KBM-7 (cell line): ENCODE measurements at regions of chr12 and their contacts with region 1.

Region 1: DNA sequence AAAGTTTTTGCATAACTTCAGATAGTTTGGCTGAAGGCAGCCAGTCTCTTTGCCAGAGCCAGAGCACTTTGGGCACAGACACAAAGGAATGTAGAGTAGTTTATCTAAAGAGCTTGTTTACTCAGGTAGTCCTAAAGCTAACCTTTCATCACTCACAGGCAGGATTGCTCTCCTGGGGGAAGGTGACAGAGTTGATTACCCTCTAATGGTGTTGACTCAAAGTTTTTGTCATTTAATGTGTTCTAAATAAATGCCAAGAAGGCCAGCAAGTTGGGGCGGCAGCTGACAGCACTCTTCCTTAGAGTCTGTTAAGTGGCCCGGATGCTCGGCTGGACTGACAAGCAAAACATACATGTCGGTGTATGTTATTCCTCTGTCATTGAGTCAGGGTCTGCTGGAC is 9.3 kb upstream of the TAS2R46 start:
- DNase-seq: no peak

Region 2: GRCh38 chr12:10849425-10849878 is 222.0 kb before region 1 on chr12 and contains the start of gene PRR4:
- in situ Hi-C with region 1: no loop called
- DNase-seq: no peak

Region 3: GRCh38 chr12:11015775-11016430 is 55.5 kb before region 1 on chr12:
- in situ Hi-C with region 1: loop called (anchors 5 kb)
- DNase-seq: peak; percentile 9